Activated CD8-positive, alpha-beta memory T cell treated with anti-CD3 and anti-CD28 coated beads, Interleukin-2, amount 10 ng/mL, durations not matched to agents 7 days and 5 days (primary cell): ENCODE measurements at regions of chr1 and their contacts with region 1.

Region 1: DNA sequence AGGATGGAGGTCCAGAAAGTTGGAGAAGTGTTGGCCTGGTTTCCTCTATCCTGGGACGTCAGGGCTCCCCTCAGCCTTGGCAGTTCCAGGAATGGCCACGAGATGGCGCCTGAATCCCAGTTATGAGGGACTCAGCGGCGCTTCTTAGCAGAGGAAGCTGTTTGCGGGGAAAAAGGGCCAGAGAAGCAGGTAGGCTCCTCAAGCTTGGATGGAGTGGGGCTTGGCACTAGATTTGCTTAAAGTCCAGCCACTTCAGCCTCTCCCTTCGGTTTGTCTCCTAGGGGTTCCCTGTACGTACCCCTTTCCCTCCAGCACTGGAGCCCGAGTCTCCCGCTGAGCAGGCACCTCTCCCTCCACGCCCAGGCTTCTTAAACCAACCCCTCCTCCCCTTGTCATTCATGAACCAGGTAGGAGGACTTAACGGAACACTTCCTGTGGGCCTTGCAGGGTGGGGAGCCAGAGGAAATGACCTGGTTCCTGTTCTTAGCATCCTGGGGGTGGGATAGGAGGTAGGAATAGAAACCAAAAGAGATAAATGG is 32.0 kb upstream of the TENT5B start:
- DNase-seq: peak; percentile 93
- ATAC-seq: peak; percentile 89
- H3K4me3 Mint-ChIP-seq: peak overlapping the region; percentile 75
- H3K27ac Mint-ChIP-seq: peak overlapping the region; percentile 73
- H3K4me1 Mint-ChIP-seq: peaks cover 22% of the 10 kb centered on the region
- H3K27me3 Mint-ChIP-seq: peaks cover 3% of the 10 kb centered on the region

Region 2: DNA sequence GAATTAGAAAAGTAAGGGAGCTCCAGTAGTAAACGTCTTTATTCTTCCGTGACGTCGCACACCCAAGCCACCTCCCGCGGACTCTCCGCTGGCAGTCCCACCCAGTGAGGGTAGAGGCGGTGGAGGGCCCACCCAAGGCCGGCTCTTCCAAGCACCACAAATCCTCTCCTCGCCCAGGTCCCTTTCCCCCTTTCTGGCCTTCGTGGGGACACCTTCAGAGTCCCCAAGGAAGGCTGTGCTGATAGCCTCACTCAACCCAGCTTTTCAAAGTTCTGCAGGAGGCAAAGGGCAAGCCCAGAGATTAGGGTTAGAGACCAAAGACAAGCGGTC is 154.2 kb before region 1 on chr1:
- CTCF ChIA-PET with region 1: no interaction called
- DNase-seq: no peak
- ATAC-seq: peak; percentile 52
- H3K4me3 Mint-ChIP-seq: peak overlapping the region; percentile 92
- H3K27ac Mint-ChIP-seq: peak overlapping the region; percentile 91
- H3K4me1 Mint-ChIP-seq: peaks cover 30% of the 10 kb centered on the region
- H3K27me3 Mint-ChIP-seq: no peaks in the 10 kb centered on the region

Region 3: DNA sequence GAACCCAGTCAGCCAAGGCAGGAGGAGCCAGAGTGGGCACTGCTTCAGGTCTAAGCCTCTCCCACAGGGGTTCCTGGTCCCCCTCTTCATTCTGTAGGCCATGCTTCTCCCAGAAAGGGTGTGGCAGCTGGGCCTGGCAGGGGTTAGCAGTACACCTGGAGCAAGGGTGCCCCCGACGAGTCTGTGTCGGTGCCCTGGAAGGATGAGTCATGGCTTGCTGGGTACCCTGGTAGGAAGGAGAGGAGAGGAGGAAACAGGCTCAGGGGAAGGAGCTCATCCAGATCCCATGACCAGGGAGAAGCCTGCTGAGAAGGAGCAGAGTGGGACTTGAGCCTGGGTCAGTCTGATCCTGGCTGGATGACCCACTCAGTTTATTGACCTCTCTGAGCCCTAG is 94.8 kb before region 1 on chr1:
- CTCF ChIA-PET with region 1: no interaction called
- DNase-seq: no peak
- ATAC-seq: no peak
- H3K4me3 Mint-ChIP-seq: no peak overlapping the region
- H3K27ac Mint-ChIP-seq: no peak overlapping the region
- H3K4me1 Mint-ChIP-seq: no peaks in the 10 kb centered on the region
- H3K27me3 Mint-ChIP-seq: no peaks in the 10 kb centered on the region

Region 4: GRCh38 chr1:26959722-26960615 is 84.7 kb before region 1 on chr1 and contains the start of gene KDF1:
- CTCF ChIA-PET with region 1: no interaction called
- DNase-seq: no peak
- ATAC-seq: peak; percentile 75
- H3K4me3 Mint-ChIP-seq: peak within 1 kb of the TSS; percentile 56
- H3K27ac Mint-ChIP-seq: no peak within 1 kb of the TSS
- H3K4me1 Mint-ChIP-seq: peaks cover 7% of the 10 kb centered on the region
- H3K27me3 Mint-ChIP-seq: peaks cover 64% of the 10 kb centered on the region
- total RNA-seq, gene KDF1: not detected

Region 5: DNA sequence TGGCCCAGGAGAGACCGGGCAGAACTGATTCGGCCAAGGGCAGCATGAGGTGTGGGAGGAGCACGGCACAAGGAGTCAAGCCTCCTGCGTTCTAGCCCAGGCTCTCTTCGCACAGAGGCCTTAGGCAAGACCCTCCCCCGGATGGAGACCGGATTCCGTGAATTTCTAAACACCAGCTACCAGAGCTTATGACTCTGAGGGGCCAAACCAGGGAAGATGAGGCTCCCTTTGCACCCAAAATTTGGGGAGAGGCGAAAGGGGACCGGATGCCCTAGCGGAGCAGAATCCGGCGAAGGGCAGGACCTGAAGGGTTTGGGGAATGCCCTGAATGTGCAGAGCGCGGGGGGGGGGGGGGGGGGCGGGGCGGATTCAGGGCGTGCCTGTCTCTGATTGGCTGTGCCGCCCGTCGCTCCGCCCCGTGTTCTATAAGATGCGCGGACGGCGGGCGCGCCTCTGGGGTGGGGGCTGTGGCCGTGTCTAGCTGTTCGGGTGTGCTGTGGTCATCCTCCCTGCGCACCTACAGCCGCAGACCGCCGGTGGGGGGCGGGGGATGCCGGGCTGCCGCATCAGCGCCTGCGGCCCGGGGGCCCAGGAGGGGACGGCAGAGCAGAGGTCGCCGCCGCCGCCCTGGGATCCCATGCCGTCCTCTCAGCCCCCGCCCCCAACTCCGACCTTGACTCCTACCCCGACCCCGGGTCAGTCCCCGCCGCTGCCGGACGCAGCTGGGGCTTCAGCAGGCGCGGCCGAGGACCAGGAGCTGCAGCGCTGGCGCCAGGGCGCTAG is 51.3 kb before region 1 on chr1 and contains the start of gene TRNP1:
- CTCF ChIA-PET with region 1: interaction called, 70 read pairs
- DNase-seq: peak; percentile 72
- ATAC-seq: peak; percentile 72
- H3K4me3 Mint-ChIP-seq: peak within 1 kb of the TSS; percentile 61
- H3K27ac Mint-ChIP-seq: no peak within 1 kb of the TSS
- H3K4me1 Mint-ChIP-seq: peaks cover 17% of the 10 kb centered on the region
- H3K27me3 Mint-ChIP-seq: peaks cover 68% of the 10 kb centered on the region
- total RNA-seq, gene TRNP1: 0.15 to 0.19 TPM

Region 6: GRCh38 chr1:27033043-27033746 is 11.5 kb before region 1 on chr1:
- CTCF ChIA-PET with region 1: interaction called, 14 read pairs
- DNase-seq: no peak
- ATAC-seq: no peak
- H3K4me3 Mint-ChIP-seq: no peak overlapping the region
- H3K27ac Mint-ChIP-seq: no peak overlapping the region
- H3K4me1 Mint-ChIP-seq: no peaks in the 10 kb centered on the region
- H3K27me3 Mint-ChIP-seq: no peaks in the 10 kb centered on the region

Region 7: DNA sequence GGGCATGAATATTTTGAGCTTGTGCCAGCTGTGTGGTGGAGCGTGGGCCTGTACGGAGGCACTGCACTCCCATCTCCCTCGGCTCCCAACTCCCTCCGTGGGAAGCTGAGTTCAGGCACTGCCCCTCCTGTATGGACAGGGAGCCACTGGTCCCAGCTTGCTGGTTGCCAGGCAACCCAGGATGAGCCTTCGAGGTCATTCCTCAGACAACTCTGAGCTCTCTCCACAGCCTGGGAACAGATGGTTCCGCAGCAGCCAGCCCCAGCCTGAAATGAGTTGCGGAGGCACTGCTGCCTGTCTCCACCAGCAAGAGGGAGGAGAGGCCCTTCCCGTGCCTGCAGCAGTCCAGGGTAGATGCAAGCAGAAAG is 26.4 kb after region 1 on chr1:
- CTCF ChIA-PET with region 1: interaction called, 13 read pairs
- DNase-seq: no peak
- ATAC-seq: no peak
- H3K4me3 Mint-ChIP-seq: no peak overlapping the region
- H3K27ac Mint-ChIP-seq: no peak overlapping the region
- H3K4me1 Mint-ChIP-seq: no peaks in the 10 kb centered on the region
- H3K27me3 Mint-ChIP-seq: peaks cover 3% of the 10 kb centered on the region

Region 8: GRCh38 chr1:27111626-27112573 is 67.2 kb after region 1 on chr1:
- CTCF ChIA-PET with region 1: interaction called, 37 read pairs
- DNase-seq: peak; percentile 87
- ATAC-seq: peak; percentile 99
- H3K4me3 Mint-ChIP-seq: no peak overlapping the region
- H3K27ac Mint-ChIP-seq: peak overlapping the region; percentile 83
- H3K4me1 Mint-ChIP-seq: peaks cover 47% of the 10 kb centered on the region
- H3K27me3 Mint-ChIP-seq: no peaks in the 10 kb centered on the region

Region 9: DNA sequence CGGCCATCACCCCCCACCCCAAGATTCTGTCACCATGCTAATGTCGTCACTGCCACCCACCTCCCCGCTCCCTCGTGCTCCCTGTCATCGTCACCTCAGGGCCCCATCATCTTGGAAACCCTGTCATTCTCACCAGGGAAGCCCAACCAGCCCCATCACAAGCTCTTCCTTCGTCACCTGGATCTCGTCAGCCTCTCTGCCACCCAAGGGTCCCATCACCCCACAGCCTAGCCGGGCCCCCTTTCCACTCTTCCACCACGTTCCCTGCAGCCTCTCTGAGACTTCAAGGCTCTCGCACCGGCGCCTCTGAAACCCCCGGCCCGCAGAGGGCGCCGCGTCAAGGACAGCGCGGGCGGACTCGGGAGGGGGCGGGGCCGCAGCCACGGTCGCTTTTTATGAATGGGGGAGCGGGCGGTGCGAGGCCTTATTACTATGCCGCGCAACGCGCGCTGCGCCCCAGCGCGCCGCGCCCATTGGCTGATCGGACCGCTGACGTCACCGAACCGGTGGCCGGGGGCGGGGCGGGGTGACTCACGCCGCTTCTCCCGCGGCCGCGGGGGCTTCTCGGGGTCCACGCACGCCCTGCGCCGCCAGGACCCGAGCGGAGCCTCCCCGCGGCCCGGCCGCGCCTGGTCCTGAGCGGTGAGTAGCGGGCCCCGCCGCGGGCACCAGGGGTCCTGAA is 347.6 kb after region 1 on chr1 and contains the start of gene GPR3:
- CTCF ChIA-PET with region 1: interaction called, 16 read pairs
- DNase-seq: peak; percentile 95
- ATAC-seq: peak; percentile 94
- H3K4me3 Mint-ChIP-seq: peak within 1 kb of the TSS; percentile 74
- H3K27ac Mint-ChIP-seq: peak within 1 kb of the TSS; percentile 76
- H3K4me1 Mint-ChIP-seq: peaks cover 8% of the 10 kb centered on the region
- H3K27me3 Mint-ChIP-seq: peaks cover 21% of the 10 kb centered on the region
- total RNA-seq, gene GPR3: 0.44 to 0.49 TPM